ENCODE measurements at regions of chr16 and their contacts with region 1.

Region 1: DNA sequence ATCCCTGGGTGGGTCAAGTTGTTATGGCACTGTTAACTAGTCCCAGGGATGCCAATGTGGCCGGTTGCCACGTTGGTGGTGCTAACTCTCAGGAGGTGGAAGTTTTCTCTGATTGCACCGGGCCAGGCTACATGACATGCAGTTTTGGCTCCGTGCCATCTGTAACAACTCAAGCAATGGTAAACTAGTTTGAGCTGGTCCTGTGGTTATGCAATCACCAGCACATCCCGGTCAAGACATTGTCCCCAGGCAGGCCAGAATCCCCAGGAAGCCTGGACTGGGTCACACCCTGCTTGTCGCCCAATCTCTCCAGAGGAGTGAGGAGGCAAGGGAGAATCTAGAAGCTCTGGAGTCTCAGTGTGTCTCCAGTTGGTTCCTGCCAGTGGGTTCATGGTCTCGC is 10.1 kb upstream of the CCL17 start:
- DNase-seq: no peak
- ATAC-seq: no peak
- H3K4me3 ChIP-seq: no peak overlapping the region
- H3K27ac ChIP-seq: no peak overlapping the region
- H3K4me1 ChIP-seq: no peaks in the 10 kb centered on the region
- H3K27me3 ChIP-seq: peaks cover 46% of the 10 kb centered on the region
- CTCF ChIP-seq: no peak
- POLR2A ChIP-seq: no peak
- RAD21 ChIP-seq: no peak

Region 2: GRCh38 chr16:56041686-56042085 is 1352.8 kb before region 1 on chr16:
- CTCF ChIA-PET with region 1: no interaction called
- POLR2A ChIA-PET with region 1: no interaction called
- dilution Hi-C with region 1: no loop called
- in situ Hi-C with region 1: no loop called
- intact Hi-C with region 1: no loop called
- DNase-seq: no peak
- ATAC-seq: no peak
- H3K4me3 ChIP-seq: no peak overlapping the region
- H3K27ac ChIP-seq: no peak overlapping the region
- H3K4me1 ChIP-seq: no peaks in the 10 kb centered on the region
- H3K27me3 ChIP-seq: no peaks in the 10 kb centered on the region
- CTCF ChIP-seq: 0 out of 2 replicates have a peak, but pooled peaks have one; percentile 11
- POLR2A ChIP-seq: no peak
- RAD21 ChIP-seq: no peak

Region 3: GRCh38 chr16:57372372-57373116 is 21.9 kb before region 1 on chr16 and contains the start of gene CX3CL1:
- CTCF ChIA-PET with region 1: no interaction called
- POLR2A ChIA-PET with region 1: no interaction called
- dilution Hi-C with region 1: no loop called
- in situ Hi-C with region 1: no loop called
- intact Hi-C with region 1: loop called (anchors 1 kb)
- DNase-seq: peak; percentile 39
- ATAC-seq: peak; percentile 89
- H3K4me3 ChIP-seq: no peak within 1 kb of the TSS
- H3K27ac ChIP-seq: no peak within 1 kb of the TSS
- H3K4me1 ChIP-seq: peaks cover 7% of the 10 kb centered on the region; the same call in 1 of the 2 replicates
- H3K27me3 ChIP-seq: peaks cover 46% of the 10 kb centered on the region
- CTCF ChIP-seq: no peak; the same call in 1 of the 2 replicates
- POLR2A ChIP-seq: no peak
- RAD21 ChIP-seq: no peak
- total RNA-seq, gene CX3CL1: under 0.01 and 0.18 TPM in 2 replicates

Measured in IMR-90 (cell line).